CD4-positive, alpha-beta T cell (primary cell): ENCODE measurements at regions of chr19 and their contacts with region 1.

Region 1: DNA sequence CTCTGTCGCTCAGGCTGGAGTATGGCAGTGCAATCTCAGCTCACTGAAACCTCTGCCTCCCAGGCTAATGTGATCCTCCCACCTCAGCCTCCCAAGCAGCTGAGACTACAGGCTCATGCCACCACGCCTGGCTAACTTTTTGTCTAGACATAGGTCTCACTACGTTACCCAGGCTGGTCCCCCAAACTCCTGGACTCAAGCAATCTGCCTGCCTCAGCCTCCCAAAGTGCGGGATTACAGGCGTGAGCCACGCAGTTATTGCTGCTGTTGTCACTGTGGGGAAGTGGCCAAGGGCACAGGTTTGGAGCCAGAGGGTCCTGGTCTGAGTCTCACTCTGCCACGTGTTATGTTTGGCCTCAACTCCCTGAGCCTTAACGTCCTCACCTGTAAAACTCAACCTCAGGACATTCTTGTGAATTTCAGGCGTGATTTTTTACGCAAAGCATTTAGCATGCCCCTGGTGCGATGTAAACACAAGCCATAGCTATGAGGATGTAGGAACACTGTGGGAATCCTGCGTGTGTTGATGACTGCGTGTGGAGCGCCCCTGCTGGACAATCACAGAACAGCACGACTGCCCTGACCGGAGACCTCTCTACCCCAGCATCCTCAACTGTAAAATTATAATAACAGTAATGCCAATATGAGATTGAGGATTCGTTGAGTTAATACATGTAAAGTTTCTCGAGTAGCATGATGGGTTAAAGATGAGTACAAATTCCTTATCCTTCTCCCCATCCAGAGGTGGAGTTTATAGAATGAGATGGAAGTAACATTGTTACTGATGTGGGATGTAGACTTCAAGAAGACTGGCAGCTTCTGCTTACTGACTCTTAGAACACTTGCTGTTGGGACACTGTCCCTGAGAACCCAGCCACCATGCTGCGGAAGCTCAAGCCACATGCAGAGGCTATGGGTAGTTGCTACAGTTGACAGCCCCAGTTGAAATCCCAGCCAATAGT is 41.8 kb upstream of the PNMA8B start:
- DNase-seq: peak; percentile 42 to 83 (median 61)
- ATAC-seq: peak; percentile 88
- H3K4me3 ChIP-seq: no peak overlapping the region
- H3K4me3 Mint-ChIP-seq: no peak overlapping the region
- H3K27ac ChIP-seq: no peak overlapping the region
- H3K27ac Mint-ChIP-seq: no peak overlapping the region
- H3K4me1 ChIP-seq: peaks cover 7% of the 10 kb centered on the region
- H3K4me1 Mint-ChIP-seq: peaks cover 6% of the 10 kb centered on the region
- H3K27me3 ChIP-seq: no peaks in the 10 kb centered on the region
- H3K27me3 Mint-ChIP-seq: peaks cover under 1% of the 10 kb centered on the region
- CTCF ChIP-seq: peak; percentile 94

Region 2: DNA sequence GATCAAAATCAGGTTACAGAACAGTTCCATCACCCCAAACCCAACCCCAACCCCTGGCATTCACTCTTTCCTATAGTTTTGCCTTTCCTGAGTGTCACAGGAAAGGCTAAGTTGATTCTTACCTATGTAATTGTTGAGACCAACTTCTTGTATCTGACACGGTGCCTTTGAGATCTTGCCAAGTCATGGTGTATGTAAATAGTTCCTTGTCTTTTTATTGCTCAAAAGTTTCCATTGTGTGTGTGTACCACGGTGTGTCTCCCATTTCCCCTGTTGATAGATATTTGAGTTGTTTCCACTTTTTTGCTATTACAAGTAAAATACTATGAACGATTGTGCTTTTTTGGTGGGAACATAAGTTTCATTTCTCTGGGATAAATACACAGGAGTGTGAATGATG is 392.7 kb before region 1 on chr19:
- CTCF ChIA-PET with region 1: no interaction called
- POLR2A ChIA-PET with region 1: no interaction called
- intact Hi-C with region 1: no loop called
- DNase-seq: no peak
- ATAC-seq: no peak
- H3K4me3 ChIP-seq: no peak overlapping the region
- H3K4me3 Mint-ChIP-seq: no peak overlapping the region
- H3K27ac ChIP-seq: no peak overlapping the region
- H3K27ac Mint-ChIP-seq: no peak overlapping the region
- H3K4me1 ChIP-seq: no peaks in the 10 kb centered on the region
- H3K4me1 Mint-ChIP-seq: no peaks in the 10 kb centered on the region
- H3K27me3 ChIP-seq: peaks cover 0 to 6% of the 10 kb centered on the region in 2 experiments
- H3K27me3 Mint-ChIP-seq: peaks cover 51% of the 10 kb centered on the region
- CTCF ChIP-seq: no peak

Region 3: GRCh38 chr19:46520616-46521015 is 16.8 kb before region 1 on chr19:
- CTCF ChIA-PET with region 1: interaction called, 19 read pairs
- POLR2A ChIA-PET with region 1: interaction called, 6 read pairs
- intact Hi-C with region 1: loop called (anchors 1 kb)
- DNase-seq: no peak
- ATAC-seq: no peak
- H3K4me3 ChIP-seq: no peak overlapping the region
- H3K4me3 Mint-ChIP-seq: no peak overlapping the region
- H3K27ac ChIP-seq: no peak overlapping the region
- H3K27ac Mint-ChIP-seq: peak overlapping the region; percentile 90
- H3K4me1 ChIP-seq: peaks cover 58% of the 10 kb centered on the region
- H3K4me1 Mint-ChIP-seq: peaks cover 68% of the 10 kb centered on the region
- H3K27me3 ChIP-seq: no peaks in the 10 kb centered on the region
- H3K27me3 Mint-ChIP-seq: no peaks in the 10 kb centered on the region
- CTCF ChIP-seq: no peak